Activated B cell treated with CpG ODN at 0.5 μM for 24 hours (primary cell): ENCODE measurements at regions of chr14 and their contacts with region 1.

Region 1: GRCh38 chr14:71320107-71320733 is 413.0 kb downstream of the PCNX1 start:
- DNase-seq: peak; percentile 90
- ATAC-seq: peak; percentile 78
- H3K4me3 Mint-ChIP-seq: peak within 1 kb of the TSS; percentile 95
- H3K27ac Mint-ChIP-seq: peak within 1 kb of the TSS; percentile 97
- H3K4me1 Mint-ChIP-seq: peaks cover 43% of the 10 kb centered on the region
- H3K27me3 Mint-ChIP-seq: no peaks in the 10 kb centered on the region
- CTCF ChIP-seq: no peak

Region 2: GRCh38 chr14:71117839-71118743 is 202.1 kb before region 1 on chr14:
- CTCF ChIA-PET with region 1: no interaction called
- POLR2A ChIA-PET with region 1: interaction called, 3 read pairs
- intact Hi-C with region 1: loop called (anchors 1 kb)
- DNase-seq: no peak
- ATAC-seq: peak; percentile 59
- H3K4me3 Mint-ChIP-seq: peak overlapping the region; percentile 41
- H3K27ac Mint-ChIP-seq: peak overlapping the region; percentile 93
- H3K4me1 Mint-ChIP-seq: peaks cover 40% of the 10 kb centered on the region
- H3K27me3 Mint-ChIP-seq: no peaks in the 10 kb centered on the region
- CTCF ChIP-seq: no peak

Region 3: DNA sequence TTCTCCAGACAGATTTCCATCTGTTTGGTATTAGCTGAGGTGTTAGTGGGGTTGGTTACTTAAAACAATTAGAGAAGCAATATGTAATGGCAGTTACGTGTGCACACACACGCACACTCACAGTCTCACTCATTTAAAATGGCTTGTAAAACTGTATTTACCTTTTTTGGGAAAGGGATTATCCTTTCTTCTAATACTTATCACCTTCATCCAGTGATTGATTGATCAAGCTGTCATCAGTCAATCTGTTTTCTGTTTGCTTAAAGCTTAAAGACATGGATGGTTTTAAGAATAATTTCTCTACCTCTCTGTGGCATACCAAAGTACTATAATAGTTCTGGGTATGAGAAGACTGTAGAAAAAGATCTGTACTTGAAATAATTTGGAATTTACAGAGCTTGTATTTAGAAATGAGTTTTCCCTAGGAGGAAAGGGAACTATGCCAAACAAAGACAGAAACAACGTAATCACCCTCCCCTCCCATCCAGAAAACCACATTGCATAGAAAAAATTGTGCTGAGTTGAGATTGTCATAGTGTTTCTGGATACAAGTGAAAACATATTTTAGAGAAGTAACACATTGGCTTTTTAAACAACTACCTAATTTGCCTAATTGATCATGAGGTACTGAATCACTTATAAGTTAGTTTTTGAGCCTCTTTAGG is 42.8 kb after region 1 on chr14:
- CTCF ChIA-PET with region 1: interaction called, 5 read pairs
- POLR2A ChIA-PET with region 1: interaction called, 37 read pairs
- intact Hi-C with region 1: loop called (anchors 1 kb)
- DNase-seq: no peak
- ATAC-seq: peak; percentile 43
- H3K4me3 Mint-ChIP-seq: peak overlapping the region; percentile 66
- H3K27ac Mint-ChIP-seq: peak overlapping the region; percentile 97
- H3K4me1 Mint-ChIP-seq: peaks cover 85% of the 10 kb centered on the region
- H3K27me3 Mint-ChIP-seq: no peaks in the 10 kb centered on the region
- CTCF ChIP-seq: no peak

Region 4: GRCh38 chr14:71415404-71415690 is 95.1 kb after region 1 on chr14:
- CTCF ChIA-PET with region 1: no interaction called
- POLR2A ChIA-PET with region 1: interaction called, 10 read pairs
- intact Hi-C with region 1: no loop called
- DNase-seq: no peak
- ATAC-seq: no peak
- H3K4me3 Mint-ChIP-seq: no peak overlapping the region
- H3K27ac Mint-ChIP-seq: no peak overlapping the region
- H3K4me1 Mint-ChIP-seq: peaks cover 35% of the 10 kb centered on the region
- H3K27me3 Mint-ChIP-seq: no peaks in the 10 kb centered on the region
- CTCF ChIP-seq: no peak

Region 5: GRCh38 chr14:71597955-71598660 is 277.9 kb after region 1 on chr14:
- CTCF ChIA-PET with region 1: no interaction called
- POLR2A ChIA-PET with region 1: no interaction called
- intact Hi-C with region 1: loop called (anchors 1 kb)
- DNase-seq: no peak
- ATAC-seq: peak; percentile 95
- H3K4me3 Mint-ChIP-seq: peak overlapping the region; percentile 21
- H3K27ac Mint-ChIP-seq: peak overlapping the region; percentile 84
- H3K4me1 Mint-ChIP-seq: peaks cover 33% of the 10 kb centered on the region
- H3K27me3 Mint-ChIP-seq: no peaks in the 10 kb centered on the region
- CTCF ChIP-seq: no peak